ENCODE measurements at regions of chr21 and their contacts with region 1.

Region 1: DNA sequence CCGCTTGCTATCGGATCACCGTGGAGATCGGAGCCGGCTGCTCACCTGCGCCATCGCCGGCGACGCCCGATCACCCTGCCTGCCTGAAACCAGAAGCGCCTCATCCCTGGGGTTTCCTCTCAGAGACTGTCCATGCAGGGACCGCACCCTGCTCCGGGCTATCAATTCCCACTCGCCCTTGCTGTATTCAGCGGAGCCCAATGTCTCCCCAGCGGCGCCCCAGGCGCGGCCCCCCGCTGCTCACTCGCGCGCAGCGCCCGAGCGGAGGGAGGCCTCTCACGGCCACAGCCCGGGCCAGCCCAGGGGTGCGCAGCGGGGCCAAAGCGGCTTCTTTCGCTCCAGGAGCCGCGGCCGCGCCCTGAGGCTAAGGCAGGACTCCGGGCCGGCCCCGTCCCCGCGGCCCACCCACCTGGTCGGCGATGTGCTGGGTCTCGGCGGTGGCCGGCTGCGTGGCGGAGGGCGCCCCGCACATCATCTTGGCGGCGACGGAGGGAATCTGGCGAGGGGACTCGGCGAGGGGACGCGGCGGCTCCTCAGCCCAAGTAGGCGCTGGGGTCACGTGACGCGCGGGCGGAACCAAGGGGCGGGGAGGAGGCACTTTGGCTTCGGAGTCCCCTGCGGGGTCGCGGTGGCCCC is at the start of gene CSTB:
- DNase-seq: peak; percentile 76 to 89 (median 82)
- ATAC-seq: peak; percentile 80
- H3K4me3 ChIP-seq: peak within 1 kb of the TSS; percentile 86
- H3K4me3 Mint-ChIP-seq: peak within 1 kb of the TSS; percentile 88
- H3K27ac ChIP-seq: peak within 1 kb of the TSS in 1 of 2 donors; percentile 35
- H3K27ac Mint-ChIP-seq: peak within 1 kb of the TSS; percentile 88
- H3K4me1 ChIP-seq: peaks cover 39% of the 10 kb centered on the region
- H3K4me1 Mint-ChIP-seq: peaks cover 37% of the 10 kb centered on the region
- H3K27me3 ChIP-seq: no peaks in the 10 kb centered on the region
- H3K27me3 Mint-ChIP-seq: no peaks in the 10 kb centered on the region
- CTCF ChIP-seq: no peak
- total RNA-seq, gene CSTB: 13.4 to 14.5 TPM

Region 2: DNA sequence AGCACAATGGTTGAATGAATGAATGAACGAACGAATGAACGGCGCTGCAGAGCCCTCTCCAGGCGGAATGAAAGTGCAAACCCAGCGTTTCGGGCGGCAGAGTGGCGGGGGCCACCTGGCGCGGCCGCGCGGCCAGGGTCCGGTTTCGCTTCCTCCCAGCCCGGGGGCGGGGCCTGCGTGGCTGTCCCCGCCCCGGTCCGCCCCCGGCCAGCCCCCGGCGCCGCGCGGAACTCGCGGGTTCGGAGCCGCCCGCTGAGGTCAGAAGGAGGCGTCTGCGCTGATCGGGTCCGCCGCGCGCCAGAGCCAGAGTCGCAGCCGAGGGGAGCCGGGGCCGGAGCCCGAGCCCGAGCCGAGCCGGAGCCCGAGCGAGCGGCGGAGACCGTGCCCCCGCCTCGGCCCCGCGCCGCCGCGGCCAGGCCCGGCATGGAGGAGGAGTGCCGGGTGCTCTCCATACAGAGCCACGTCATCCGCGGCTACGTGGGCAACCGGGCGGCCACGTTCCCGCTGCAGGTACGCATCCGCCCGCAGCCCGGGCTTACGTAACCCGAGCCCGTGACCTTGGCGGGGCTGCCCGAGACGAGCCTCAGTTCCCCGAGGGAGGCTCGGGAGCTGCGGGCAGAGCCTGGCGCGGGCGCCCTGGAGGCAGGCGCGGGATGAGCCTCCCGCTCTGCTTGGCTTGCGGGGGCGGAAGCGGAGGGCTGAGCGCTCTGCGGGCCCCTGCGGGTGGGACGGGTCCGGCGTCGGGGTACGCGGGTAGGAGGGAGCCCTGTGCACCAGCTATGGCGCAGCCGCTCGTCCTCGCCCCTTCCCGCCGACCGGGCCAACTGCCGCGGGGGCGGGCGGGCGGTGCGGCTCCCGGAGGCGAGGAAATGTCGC is 56.8 kb before region 1 on chr21 and contains the start of gene PDXK:
- CTCF ChIA-PET with region 1: no interaction called
- POLR2A ChIA-PET with region 1: no interaction called
- intact Hi-C with region 1: loop called in 1 of 2 experiments (anchors 5 kb)
- DNase-seq: peak; percentile 49 to 93 (median 68)
- ATAC-seq: peak; percentile 81
- H3K4me3 ChIP-seq: peak within 1 kb of the TSS; percentile 94
- H3K4me3 Mint-ChIP-seq: peak within 1 kb of the TSS; percentile 94
- H3K27ac ChIP-seq: peak within 1 kb of the TSS; percentile 15 to 53
- H3K27ac Mint-ChIP-seq: peak within 1 kb of the TSS; percentile 86
- H3K4me1 ChIP-seq: peaks cover 38% of the 10 kb centered on the region
- H3K4me1 Mint-ChIP-seq: peaks cover 28% of the 10 kb centered on the region
- H3K27me3 ChIP-seq: no peaks in the 10 kb centered on the region
- H3K27me3 Mint-ChIP-seq: no peaks in the 10 kb centered on the region
- CTCF ChIP-seq: no peak
- total RNA-seq, gene PDXK: 74.8 to 77.0 TPM

Region 3: GRCh38 chr21:43789276-43790009 is 13.5 kb after region 1 on chr21 and contains the start of gene RRP1:
- CTCF ChIA-PET with region 1: interaction called, 7 read pairs
- POLR2A ChIA-PET with region 1: interaction called, 3 read pairs
- intact Hi-C with region 1: loop called in 1 of 2 experiments (anchors 1 kb)
- DNase-seq: peak; percentile 85 to 98 (median 94)
- ATAC-seq: peak; percentile 93
- H3K4me3 ChIP-seq: peak within 1 kb of the TSS; percentile 76
- H3K4me3 Mint-ChIP-seq: peak within 1 kb of the TSS; percentile 95
- H3K27ac ChIP-seq: peak within 1 kb of the TSS; percentile 44 to 55
- H3K27ac Mint-ChIP-seq: peak within 1 kb of the TSS; percentile 84
- H3K4me1 ChIP-seq: peaks cover 27% of the 10 kb centered on the region
- H3K4me1 Mint-ChIP-seq: peaks cover 18% of the 10 kb centered on the region
- H3K27me3 ChIP-seq: no peaks in the 10 kb centered on the region
- H3K27me3 Mint-ChIP-seq: no peaks in the 10 kb centered on the region
- CTCF ChIP-seq: peak; percentile 92
- total RNA-seq, gene RRP1: 27.7 to 29.0 TPM

Region 4: GRCh38 chr21:43825681-43826622 is 50.0 kb after region 1 on chr21:
- CTCF ChIA-PET with region 1: no interaction called
- POLR2A ChIA-PET with region 1: no interaction called
- intact Hi-C with region 1: no loop called
- DNase-seq: no peak
- ATAC-seq: no peak
- H3K4me3 ChIP-seq: no peak overlapping the region
- H3K4me3 Mint-ChIP-seq: no peak overlapping the region
- H3K27ac ChIP-seq: no peak overlapping the region
- H3K27ac Mint-ChIP-seq: no peak overlapping the region
- H3K4me1 ChIP-seq: no peaks in the 10 kb centered on the region
- H3K4me1 Mint-ChIP-seq: no peaks in the 10 kb centered on the region
- H3K27me3 ChIP-seq: peaks cover 0 to 5% of the 10 kb centered on the region in 2 experiments
- H3K27me3 Mint-ChIP-seq: peaks cover 7% of the 10 kb centered on the region
- CTCF ChIP-seq: no peak

Region 5: GRCh38 chr21:43984905-43985689 is 209.2 kb after region 1 on chr21:
- CTCF ChIA-PET with region 1: no interaction called
- POLR2A ChIA-PET with region 1: no interaction called
- intact Hi-C with region 1: no loop called
- DNase-seq: peak in 1 of 14 experiments; percentile 13
- ATAC-seq: peak; percentile 68
- H3K4me3 ChIP-seq: no peak overlapping the region
- H3K4me3 Mint-ChIP-seq: no peak overlapping the region
- H3K27ac ChIP-seq: no peak overlapping the region
- H3K27ac Mint-ChIP-seq: peak overlapping the region; percentile 73
- H3K4me1 ChIP-seq: peaks cover 7% of the 10 kb centered on the region
- H3K4me1 Mint-ChIP-seq: peaks cover 20% of the 10 kb centered on the region
- H3K27me3 ChIP-seq: no peaks in the 10 kb centered on the region
- H3K27me3 Mint-ChIP-seq: no peaks in the 10 kb centered on the region
- CTCF ChIP-seq: no peak

Region 6: GRCh38 chr21:44083631-44084291 is 307.8 kb after region 1 on chr21:
- CTCF ChIA-PET with region 1: no interaction called
- POLR2A ChIA-PET with region 1: no interaction called
- intact Hi-C with region 1: no loop called
- DNase-seq: peak; percentile 44 to 90 (median 66)
- ATAC-seq: peak; percentile 81
- H3K4me3 ChIP-seq: peak overlapping the region; percentile 41
- H3K4me3 Mint-ChIP-seq: peak overlapping the region; percentile 69
- H3K27ac ChIP-seq: peak overlapping the region; percentile 80 to 91
- H3K27ac Mint-ChIP-seq: peak overlapping the region; percentile 95
- H3K4me1 ChIP-seq: peaks cover 96% of the 10 kb centered on the region
- H3K4me1 Mint-ChIP-seq: peaks cover 85% of the 10 kb centered on the region
- H3K27me3 ChIP-seq: no peaks in the 10 kb centered on the region
- H3K27me3 Mint-ChIP-seq: no peaks in the 10 kb centered on the region
- CTCF ChIP-seq: no peak

Measured in CD4-positive, alpha-beta T cell (primary cell).